ENCODE measurements at regions of chr1 and their contacts with region 1.

Region 1: GRCh38 chr1:55021965-55022546 is 17.3 kb upstream of the PCSK9 start:
- DNase-seq: peak; percentile 82
- H3K4me3 Mint-ChIP-seq: no peak overlapping the region
- H3K27ac Mint-ChIP-seq: no peak overlapping the region
- H3K4me1 Mint-ChIP-seq: no peaks in the 10 kb centered on the region
- H3K27me3 Mint-ChIP-seq: no peaks in the 10 kb centered on the region

Region 2: GRCh38 chr1:54671985-54672608 is 350.0 kb before region 1 on chr1:
- CTCF ChIA-PET with region 1: no interaction called
- intact Hi-C with region 1: loop called (anchors 1 kb)
- DNase-seq: peak; percentile 84
- H3K4me3 Mint-ChIP-seq: no peak overlapping the region
- H3K27ac Mint-ChIP-seq: no peak overlapping the region
- H3K4me1 Mint-ChIP-seq: no peaks in the 10 kb centered on the region
- H3K27me3 Mint-ChIP-seq: no peaks in the 10 kb centered on the region

Region 3: DNA sequence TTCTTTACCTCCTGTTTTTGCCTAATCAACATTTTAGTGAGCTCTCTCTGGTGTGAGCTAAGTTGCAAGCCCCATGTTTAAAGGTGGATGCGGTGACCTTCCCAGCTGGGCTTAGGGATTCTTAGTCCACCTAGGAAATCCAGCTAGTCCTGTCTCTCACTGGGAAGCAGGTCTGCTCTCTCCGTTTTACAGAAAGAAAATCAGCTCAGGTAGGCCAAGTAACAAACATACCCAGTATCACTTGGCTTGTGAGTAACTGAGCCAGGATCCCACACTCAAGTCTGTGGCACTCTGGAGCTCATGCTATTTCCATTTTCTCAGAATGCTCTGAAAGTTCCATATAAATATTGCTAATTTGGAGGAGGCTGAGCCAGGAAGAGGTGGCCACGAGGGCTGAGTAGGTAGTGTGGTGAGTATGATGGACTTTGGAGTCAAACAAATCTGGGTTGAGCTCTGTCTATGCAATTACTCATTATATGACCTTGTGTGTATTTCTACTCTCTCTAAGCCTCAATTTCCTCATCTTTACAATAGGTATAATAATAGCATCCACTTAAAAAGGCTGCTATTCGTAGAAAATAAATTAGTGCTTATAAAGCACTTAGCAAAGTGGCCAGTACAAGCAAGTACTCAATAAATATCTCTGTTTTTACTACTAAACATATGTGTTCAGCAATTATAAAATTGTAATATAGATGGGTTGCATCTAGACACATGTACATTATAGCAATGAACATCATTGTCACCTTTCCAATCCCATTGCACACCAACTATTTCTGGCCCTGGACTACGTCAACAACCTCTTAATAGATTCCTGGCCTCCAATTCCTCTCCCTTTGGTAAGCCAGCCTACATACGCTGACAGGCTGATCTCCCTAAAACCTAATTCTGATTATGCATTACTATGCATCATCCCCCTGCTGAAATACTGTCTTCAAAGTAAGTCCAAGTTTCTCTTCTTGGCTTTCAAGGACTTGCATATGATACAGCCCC is 102.4 kb before region 1 on chr1:
- CTCF ChIA-PET with region 1: no interaction called
- intact Hi-C with region 1: no loop called
- DNase-seq: no peak
- H3K4me3 Mint-ChIP-seq: no peak overlapping the region
- H3K27ac Mint-ChIP-seq: no peak overlapping the region
- H3K4me1 Mint-ChIP-seq: no peaks in the 10 kb centered on the region
- H3K27me3 Mint-ChIP-seq: peaks cover 6% of the 10 kb centered on the region

Region 4: DNA sequence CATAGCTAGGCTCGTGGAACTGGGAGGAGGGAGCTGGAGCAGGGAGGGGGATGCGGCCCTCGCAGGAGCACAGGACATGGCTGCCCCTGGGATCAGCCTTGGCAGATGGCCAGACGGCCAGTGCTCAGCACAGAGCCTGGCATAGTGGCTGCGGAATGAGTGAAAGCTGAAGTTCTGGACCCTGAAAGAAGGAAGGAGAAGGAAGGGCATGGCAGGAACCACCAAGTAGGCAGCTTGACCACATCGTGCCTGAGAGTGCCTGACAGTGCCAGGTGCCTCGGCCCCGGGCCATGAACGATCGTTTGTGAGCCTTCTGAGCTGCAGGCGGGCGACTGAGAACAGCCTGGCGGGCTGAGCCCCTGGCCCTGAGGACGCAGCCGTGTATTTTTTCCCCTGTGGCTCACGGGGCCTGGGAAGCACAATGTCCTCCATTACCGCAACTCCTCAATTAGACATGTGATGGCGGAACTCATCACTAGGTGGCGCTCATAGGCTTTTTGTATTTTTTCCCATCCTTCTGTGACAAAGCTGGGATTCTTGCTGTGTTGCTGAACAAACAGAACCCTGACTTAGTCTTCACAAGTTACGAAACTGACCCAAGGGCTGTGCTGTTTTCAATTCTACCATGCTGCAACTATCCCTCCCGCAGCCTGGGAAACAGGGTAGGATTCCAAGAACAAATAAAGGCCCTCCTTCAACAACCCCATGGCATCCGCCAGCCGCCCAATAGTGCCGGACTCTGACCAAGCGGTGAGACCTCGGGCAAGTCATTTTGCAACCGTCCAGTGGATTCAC is 71.5 kb before region 1 on chr1:
- CTCF ChIA-PET with region 1: interaction called, 70 read pairs
- intact Hi-C with region 1: loop called (anchors 1 kb)
- DNase-seq: peak; percentile 81
- H3K4me3 Mint-ChIP-seq: no peak overlapping the region
- H3K27ac Mint-ChIP-seq: no peak overlapping the region
- H3K4me1 Mint-ChIP-seq: no peaks in the 10 kb centered on the region
- H3K27me3 Mint-ChIP-seq: no peaks in the 10 kb centered on the region

Region 5: DNA sequence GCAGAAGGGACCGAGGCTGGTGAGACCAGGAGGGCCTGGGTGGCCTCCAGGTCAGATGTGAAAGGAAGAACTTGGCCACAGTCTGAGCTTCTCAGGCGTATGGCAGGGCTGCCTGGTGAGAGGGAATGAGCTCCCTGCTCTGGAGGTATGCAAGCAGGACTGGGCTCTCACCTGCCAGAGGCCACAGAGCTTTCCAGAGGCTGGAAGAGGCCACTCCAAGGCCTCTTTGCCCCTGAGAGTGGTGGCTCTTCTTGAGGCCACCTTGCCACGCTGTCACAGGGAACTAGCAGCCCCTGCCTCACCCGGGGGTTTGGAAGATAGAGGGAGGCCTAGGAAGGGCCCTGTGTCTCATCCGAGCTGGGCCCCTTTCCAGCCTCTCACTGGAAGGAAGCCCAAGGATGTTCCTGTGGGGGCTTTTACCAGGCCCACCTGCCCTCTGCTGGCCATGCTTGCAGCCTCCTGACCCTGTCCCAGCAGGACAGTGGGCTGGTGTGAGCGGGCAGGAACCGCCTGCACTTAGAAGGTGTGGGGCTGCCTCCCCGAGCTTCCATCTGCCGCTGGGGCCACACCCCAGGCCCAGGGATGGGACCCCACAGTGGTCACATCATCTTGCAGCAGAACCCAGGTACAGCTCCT is 27.3 kb after region 1 on chr1:
- CTCF ChIA-PET with region 1: no interaction called
- intact Hi-C with region 1: no loop called
- DNase-seq: no peak
- H3K4me3 Mint-ChIP-seq: no peak overlapping the region
- H3K27ac Mint-ChIP-seq: no peak overlapping the region
- H3K4me1 Mint-ChIP-seq: no peaks in the 10 kb centered on the region
- H3K27me3 Mint-ChIP-seq: no peaks in the 10 kb centered on the region

Measured in activated naive CD4-positive, alpha-beta T cell treated with anti-CD3 and anti-CD28 coated beads for 36 hours (primary cell).